Activated CD4-positive, alpha-beta T cell treated with anti-CD3 and anti-CD28 coated beads for 36 hours (primary cell): ENCODE measurements at regions of chr5 and their contacts with region 1.

Region 1: DNA sequence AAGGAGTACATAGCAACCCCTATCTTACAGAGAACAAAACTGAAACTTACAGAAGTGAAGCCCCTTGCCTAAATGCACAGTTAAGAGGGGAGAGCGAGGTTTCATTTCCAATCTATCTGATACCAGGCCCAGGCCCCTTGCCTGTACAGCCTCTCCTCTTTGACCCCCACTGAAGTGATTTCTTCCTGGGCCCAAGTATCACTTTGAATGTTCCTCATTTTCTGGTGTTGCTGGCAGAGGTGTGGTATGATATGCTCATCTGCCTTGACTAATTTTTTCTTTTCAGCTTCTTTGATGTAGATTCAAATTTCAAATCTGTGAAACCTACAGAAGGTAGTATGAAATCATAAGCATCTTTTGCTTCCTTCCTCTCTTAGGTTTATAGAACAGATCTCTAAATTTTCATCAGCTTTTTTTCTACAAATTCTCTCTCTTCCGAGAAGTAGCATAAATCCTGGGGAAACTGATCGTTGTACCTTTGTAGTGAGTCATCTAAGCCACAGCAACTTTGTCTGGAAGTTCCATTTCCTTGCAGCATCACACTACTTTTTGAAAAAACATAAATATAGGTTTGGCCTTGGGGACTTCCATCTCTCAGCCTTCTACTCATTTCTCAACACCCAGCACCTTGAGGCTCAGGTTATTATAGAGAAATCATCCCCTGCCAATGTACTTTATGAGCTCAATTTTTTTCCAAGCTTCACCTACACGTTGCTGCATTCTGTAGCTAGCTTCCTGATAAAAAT is 402.4 kb upstream of the PTGER4 start:
- DNase-seq: peak; percentile 59
- ATAC-seq: peak; percentile 77
- H3K4me3 Mint-ChIP-seq: peak overlapping the region; percentile 39
- H3K27ac Mint-ChIP-seq: peak overlapping the region; percentile 95
- H3K4me1 Mint-ChIP-seq: peaks cover 77% of the 10 kb centered on the region
- H3K27me3 Mint-ChIP-seq: no peaks in the 10 kb centered on the region

Region 2: GRCh38 chr5:39846144-39846543 is 431.2 kb before region 1 on chr5:
- CTCF ChIA-PET with region 1: no interaction called
- POLR2A ChIA-PET with region 1: no interaction called
- intact Hi-C with region 1: no loop called
- DNase-seq: no peak
- ATAC-seq: no peak
- H3K4me3 Mint-ChIP-seq: no peak overlapping the region
- H3K27ac Mint-ChIP-seq: no peak overlapping the region
- H3K4me1 Mint-ChIP-seq: no peaks in the 10 kb centered on the region
- H3K27me3 Mint-ChIP-seq: peaks cover 16% of the 10 kb centered on the region

Region 3: DNA sequence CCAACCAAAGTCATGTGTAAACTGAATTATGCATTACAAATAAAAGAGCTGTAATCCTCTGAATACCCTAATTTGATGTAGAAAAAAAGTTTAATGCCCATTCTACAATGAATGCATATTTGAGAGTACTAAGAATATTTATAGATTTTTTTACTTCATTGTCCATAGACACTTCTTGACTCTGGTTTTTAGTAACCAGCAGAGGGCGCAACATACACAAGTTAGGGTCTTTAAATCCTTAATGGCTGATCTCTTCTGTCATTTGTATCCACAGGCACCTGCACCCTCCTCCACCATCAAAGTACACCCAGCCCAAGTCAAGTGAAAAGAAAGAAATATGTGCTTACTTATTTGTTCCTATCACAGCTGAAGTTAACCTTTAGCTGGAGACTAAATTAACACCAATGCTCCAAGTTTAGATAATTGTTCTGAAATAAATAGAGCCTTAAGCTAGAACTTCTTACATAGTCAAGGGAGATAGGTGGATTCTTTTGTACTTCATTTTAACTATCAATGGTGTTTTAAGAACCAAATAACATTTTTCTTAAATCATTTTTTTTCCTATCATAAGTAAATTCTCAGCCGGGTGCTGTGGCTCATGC is 328.4 kb before region 1 on chr5:
- CTCF ChIA-PET with region 1: no interaction called
- POLR2A ChIA-PET with region 1: no interaction called
- intact Hi-C with region 1: loop called in 1 of 2 experiments (anchors 10 kb)
- DNase-seq: peak; percentile 70
- ATAC-seq: peak; percentile 97
- H3K4me3 Mint-ChIP-seq: no peak overlapping the region
- H3K27ac Mint-ChIP-seq: no peak overlapping the region
- H3K4me1 Mint-ChIP-seq: peaks cover 5% of the 10 kb centered on the region
- H3K27me3 Mint-ChIP-seq: no peaks in the 10 kb centered on the region

Region 4: DNA sequence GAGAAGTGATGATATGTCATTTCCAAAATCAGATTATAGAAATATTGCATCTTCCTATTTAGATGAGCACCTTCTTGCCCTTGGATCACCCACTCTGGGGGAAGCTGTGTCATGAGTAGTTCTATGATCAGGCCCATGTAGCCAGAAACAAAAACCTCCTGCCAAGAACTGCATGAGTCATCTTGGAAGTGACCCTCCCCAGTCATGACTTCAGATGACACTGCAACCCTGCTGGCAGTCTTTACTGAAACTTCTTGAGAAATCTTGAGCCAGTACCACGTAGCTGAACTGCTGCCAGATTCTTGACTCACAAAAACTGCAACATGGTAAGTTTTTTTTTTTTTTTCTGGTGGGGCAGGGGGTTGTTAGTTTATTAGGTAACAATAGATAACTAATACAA is 37.2 kb before region 1 on chr5:
- CTCF ChIA-PET with region 1: interaction called, 3 read pairs
- POLR2A ChIA-PET with region 1: interaction called, 3 read pairs
- intact Hi-C with region 1: loop called (anchors 1 kb)
- DNase-seq: peak; percentile 74
- ATAC-seq: peak; percentile 91
- H3K4me3 Mint-ChIP-seq: no peak overlapping the region
- H3K27ac Mint-ChIP-seq: no peak overlapping the region
- H3K4me1 Mint-ChIP-seq: peaks cover 28% of the 10 kb centered on the region
- H3K27me3 Mint-ChIP-seq: no peaks in the 10 kb centered on the region

Region 5: DNA sequence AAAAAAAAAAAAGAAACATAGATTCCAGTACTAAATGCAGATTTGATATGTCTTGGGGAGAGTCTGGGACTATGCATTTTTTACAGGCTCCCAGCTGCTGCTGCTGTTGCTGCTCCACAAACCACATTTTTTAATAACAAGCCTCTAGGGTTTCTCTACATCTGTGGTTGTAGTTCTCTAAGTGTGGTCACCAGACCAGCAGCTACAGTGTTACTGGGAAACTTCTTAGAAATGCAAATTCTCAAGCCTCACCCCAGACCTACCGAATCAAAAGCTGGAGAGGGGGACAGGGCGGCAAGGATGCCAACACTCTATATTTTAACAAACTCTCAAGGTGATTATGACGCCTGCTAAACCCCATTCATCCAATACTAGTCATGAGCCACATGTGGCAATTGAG is 109.0 kb after region 1 on chr5:
- CTCF ChIA-PET with region 1: interaction called, 7 read pairs
- POLR2A ChIA-PET with region 1: interaction called, 7 read pairs
- intact Hi-C with region 1: loop called (anchors 1 kb)
- DNase-seq: peak; percentile 39
- ATAC-seq: peak; percentile 11
- H3K4me3 Mint-ChIP-seq: no peak overlapping the region
- H3K27ac Mint-ChIP-seq: peak overlapping the region; percentile 92
- H3K4me1 Mint-ChIP-seq: peaks cover 86% of the 10 kb centered on the region
- H3K27me3 Mint-ChIP-seq: no peaks in the 10 kb centered on the region

Region 6: DNA sequence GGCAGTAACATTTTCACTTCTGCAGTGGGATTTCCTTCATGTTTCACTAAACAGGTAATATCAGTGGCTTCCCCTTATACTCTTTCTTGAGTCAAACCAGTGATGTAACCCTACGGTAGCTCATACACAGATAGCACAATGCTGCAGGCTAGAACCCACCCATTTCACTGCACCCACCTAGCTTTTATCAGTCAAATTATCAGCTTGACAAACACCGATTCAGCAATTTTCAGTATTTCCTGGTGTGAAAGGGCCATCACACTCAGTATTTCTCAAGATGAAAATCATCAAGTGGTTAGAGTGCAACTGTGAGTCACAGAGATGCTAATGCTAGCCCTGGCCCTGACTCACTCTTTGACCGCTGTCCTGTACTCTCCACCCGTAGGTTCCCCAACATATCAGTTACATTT is 160.1 kb after region 1 on chr5:
- CTCF ChIA-PET with region 1: interaction called, 3 read pairs
- POLR2A ChIA-PET with region 1: no interaction called
- intact Hi-C with region 1: loop called (anchors 1 to 2 kb)
- DNase-seq: peak; percentile 55
- ATAC-seq: peak; percentile 61
- H3K4me3 Mint-ChIP-seq: no peak overlapping the region
- H3K27ac Mint-ChIP-seq: peak overlapping the region; percentile 61
- H3K4me1 Mint-ChIP-seq: peaks cover 80% of the 10 kb centered on the region
- H3K27me3 Mint-ChIP-seq: no peaks in the 10 kb centered on the region

Region 7: GRCh38 chr5:40679155-40679913 is 402.0 kb after region 1 on chr5:
- CTCF ChIA-PET with region 1: no interaction called
- POLR2A ChIA-PET with region 1: interaction called, 4 read pairs
- intact Hi-C with region 1: loop called (anchors 1 to 2 kb)
- DNase-seq: peak; percentile 97
- ATAC-seq: peak; percentile 59
- H3K4me3 Mint-ChIP-seq: peak overlapping the region; percentile 93
- H3K27ac Mint-ChIP-seq: peak overlapping the region; percentile 97
- H3K4me1 Mint-ChIP-seq: peaks cover 38% of the 10 kb centered on the region
- H3K27me3 Mint-ChIP-seq: no peaks in the 10 kb centered on the region